ENCODE measurements at regions of chr6 and their contacts with region 1.

Region 1: GRCh38 chr6:6643398-6643797 is 54.9 kb downstream of the LY86 start:
- DNase-seq: peak; percentile 86
- ATAC-seq: peak; percentile 93
- H3K4me3 Mint-ChIP-seq: no peak overlapping the region
- H3K27ac Mint-ChIP-seq: peak overlapping the region; percentile 88
- H3K4me1 Mint-ChIP-seq: peaks cover 54% of the 10 kb centered on the region
- H3K27me3 Mint-ChIP-seq: no peaks in the 10 kb centered on the region

Region 2: DNA sequence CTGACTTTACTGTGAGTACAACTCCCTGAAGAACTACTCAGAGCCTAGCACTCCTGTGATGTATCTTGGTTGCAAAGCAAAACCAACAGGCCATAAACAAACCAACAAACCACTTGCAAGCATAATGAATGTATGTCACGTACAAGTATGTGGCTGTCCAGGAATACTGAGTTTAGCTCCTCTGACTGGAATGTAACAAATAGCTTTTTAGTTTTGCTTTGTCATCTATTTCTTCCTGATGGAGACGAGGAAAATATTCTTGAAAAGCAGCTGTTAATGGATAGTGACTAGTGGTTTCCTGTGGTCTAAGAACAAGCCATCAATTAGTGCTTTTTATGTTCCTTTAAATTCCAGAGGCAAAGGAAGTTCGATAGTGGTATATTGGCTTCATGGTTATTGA is 156.8 kb before region 1 on chr6:
- CTCF ChIA-PET with region 1: no interaction called
- DNase-seq: no peak
- ATAC-seq: no peak
- H3K4me3 Mint-ChIP-seq: no peak overlapping the region
- H3K27ac Mint-ChIP-seq: no peak overlapping the region
- H3K4me1 Mint-ChIP-seq: no peaks in the 10 kb centered on the region
- H3K27me3 Mint-ChIP-seq: peaks cover 20% of the 10 kb centered on the region

Region 3: DNA sequence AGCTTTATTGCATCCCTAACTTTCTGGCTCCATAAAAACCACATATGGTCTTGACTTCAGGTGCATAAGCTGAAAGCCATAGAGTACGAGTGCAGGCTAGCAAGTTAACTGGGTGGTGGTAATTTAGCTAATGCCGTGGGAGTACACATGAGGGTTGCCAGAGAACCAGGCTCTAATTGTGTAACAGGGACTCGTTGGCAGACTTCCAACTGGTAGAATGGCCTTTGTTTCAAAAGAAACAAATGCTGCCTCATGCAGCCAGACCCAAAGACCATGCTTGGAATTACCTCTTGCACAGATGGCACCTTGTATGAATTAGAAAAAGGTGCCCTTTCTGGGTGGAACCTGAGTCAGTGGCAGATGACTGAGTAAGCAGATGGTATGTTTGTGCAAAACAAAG is 18.3 kb after region 1 on chr6:
- CTCF ChIA-PET with region 1: interaction called, 26 read pairs
- DNase-seq: no peak
- ATAC-seq: no peak
- H3K4me3 Mint-ChIP-seq: no peak overlapping the region
- H3K27ac Mint-ChIP-seq: peak overlapping the region; percentile 33
- H3K4me1 Mint-ChIP-seq: peaks cover 56% of the 10 kb centered on the region
- H3K27me3 Mint-ChIP-seq: no peaks in the 10 kb centered on the region

Region 4: DNA sequence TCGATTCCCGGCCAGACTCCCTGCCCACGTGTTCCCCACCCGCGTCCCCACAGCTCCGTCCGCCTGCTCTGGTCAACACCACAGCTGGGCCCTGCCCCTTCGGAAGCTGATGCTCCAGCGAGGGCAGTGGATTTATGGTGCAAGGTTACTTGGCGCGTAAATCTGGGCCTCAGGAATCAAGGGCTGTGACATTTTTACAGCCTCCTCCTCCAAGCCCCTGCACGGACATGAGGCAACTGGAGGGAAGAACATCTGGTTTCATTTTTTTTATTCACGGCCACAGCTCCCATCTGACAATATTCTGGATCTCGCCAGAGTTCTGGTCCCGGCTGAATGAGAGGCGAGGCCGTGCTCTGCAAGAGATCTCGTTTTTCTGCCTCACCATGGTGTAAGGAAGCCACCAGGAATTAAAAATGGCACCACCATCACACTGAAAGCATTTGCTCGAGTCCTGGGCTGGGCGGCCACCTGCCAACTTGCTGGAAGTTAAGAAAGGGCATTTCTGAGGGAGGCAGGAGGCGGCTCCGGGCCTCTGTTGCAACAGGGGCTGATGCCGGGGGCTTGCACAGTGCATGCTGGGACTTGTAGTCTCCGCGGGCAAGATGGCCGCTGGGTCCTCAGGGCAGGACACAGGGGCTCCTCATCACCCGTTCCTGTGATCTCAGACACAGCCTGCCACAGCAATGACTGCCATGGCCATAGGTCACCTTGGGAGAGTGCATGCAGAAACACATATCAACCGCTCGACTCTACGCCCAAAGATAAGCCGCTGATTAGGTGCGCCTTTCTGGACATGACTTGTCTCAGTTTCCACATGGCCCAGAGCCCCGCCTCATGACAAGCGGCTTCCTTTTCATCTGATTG is 93.6 kb after region 1 on chr6:
- CTCF ChIA-PET with region 1: no interaction called
- DNase-seq: no peak
- ATAC-seq: no peak
- H3K4me3 Mint-ChIP-seq: no peak overlapping the region
- H3K27ac Mint-ChIP-seq: no peak overlapping the region
- H3K4me1 Mint-ChIP-seq: no peaks in the 10 kb centered on the region
- H3K27me3 Mint-ChIP-seq: peaks cover 68% of the 10 kb centered on the region

Measured in activated CD8-positive, alpha-beta memory T cell treated with anti-CD3 and anti-CD28 coated beads, Interleukin-2, amount 10 ng/mL, durations not matched to agents 7 days and 5 days (primary cell).